Naive thymus-derived CD4-positive, alpha-beta T cell (primary cell): ENCODE measurements at regions of chr16 and their contacts with region 1.

Region 1: GRCh38 chr16:10385725-10386516 is at the start of gene ATF7IP2:
- DNase-seq: peak; percentile 68 to 85 (median 83)
- ATAC-seq: peak; percentile 99
- H3K4me3 ChIP-seq: peak within 1 kb of the TSS; percentile 67
- H3K4me3 Mint-ChIP-seq: peak within 1 kb of the TSS; percentile 89 to 99 (median 98)
- H3K27ac ChIP-seq: peak within 1 kb of the TSS; percentile 84
- H3K27ac Mint-ChIP-seq: peak within 1 kb of the TSS; percentile 90 to 99 (median 97)
- H3K4me1 ChIP-seq: peaks cover 14 to 16% of the 10 kb centered on the region in 2 donors
- H3K4me1 Mint-ChIP-seq: peaks cover 31 to 52% (median 47%) of the 10 kb centered on the region in 7 donors
- H3K27me3 ChIP-seq: no peaks in the 10 kb centered on the region
- H3K27me3 Mint-ChIP-seq: peaks cover 0 to 3% (median 0%) of the 10 kb centered on the region in 5 donors
- total RNA-seq, gene ATF7IP2: 56.5 to 75.5 (median 67.1) TPM

Region 2: GRCh38 chr16:10122546-10122945 is 263.4 kb before region 1 on chr16:
- CTCF ChIA-PET with region 1: no interaction called
- POLR2A ChIA-PET with region 1: no interaction called
- intact Hi-C with region 1: no loop called
- DNase-seq: no peak
- ATAC-seq: no peak
- H3K4me3 ChIP-seq: no peak overlapping the region
- H3K4me3 Mint-ChIP-seq: no peak overlapping the region
- H3K27ac ChIP-seq: no peak overlapping the region
- H3K27ac Mint-ChIP-seq: no peak overlapping the region
- H3K4me1 ChIP-seq: no peaks in the 10 kb centered on the region
- H3K4me1 Mint-ChIP-seq: no peaks in the 10 kb centered on the region
- H3K27me3 ChIP-seq: no peaks in the 10 kb centered on the region
- H3K27me3 Mint-ChIP-seq: peaks cover 0 to 26% (median 21%) of the 10 kb centered on the region in 5 donors

Region 3: GRCh38 chr16:10314811-10315210 is 71.1 kb before region 1 on chr16:
- CTCF ChIA-PET with region 1: interaction called, 4 read pairs
- POLR2A ChIA-PET with region 1: interaction called, 4 read pairs
- intact Hi-C with region 1: loop called in 1 of 2 experiments (anchors 2 kb)
- DNase-seq: peak in 6 of 9 donors; percentile 25 to 63 (median 46)
- ATAC-seq: peak; percentile 65
- H3K4me3 ChIP-seq: no peak overlapping the region
- H3K4me3 Mint-ChIP-seq: no peak overlapping the region
- H3K27ac ChIP-seq: no peak overlapping the region
- H3K27ac Mint-ChIP-seq: no peak overlapping the region
- H3K4me1 ChIP-seq: no peaks in the 10 kb centered on the region
- H3K4me1 Mint-ChIP-seq: peaks cover 9 to 27% (median 20%) of the 10 kb centered on the region in 7 donors
- H3K27me3 ChIP-seq: no peaks in the 10 kb centered on the region
- H3K27me3 Mint-ChIP-seq: no peaks in the 10 kb centered on the region

Region 4: GRCh38 chr16:10332241-10332640 is 53.7 kb before region 1 on chr16:
- CTCF ChIA-PET with region 1: no interaction called
- POLR2A ChIA-PET with region 1: interaction called, 5 read pairs
- intact Hi-C with region 1: loop called (anchors 1 to 2 kb)
- DNase-seq: no peak
- ATAC-seq: no peak
- H3K4me3 ChIP-seq: no peak overlapping the region
- H3K4me3 Mint-ChIP-seq: peak overlapping the region in 3 of 10 donors; percentile 14 to 47 (median 32)
- H3K27ac ChIP-seq: no peak overlapping the region
- H3K27ac Mint-ChIP-seq: peak overlapping the region in 6 of 9 donors; percentile 31 to 67 (median 59)
- H3K4me1 ChIP-seq: peaks cover 18 to 43% of the 10 kb centered on the region in 2 donors
- H3K4me1 Mint-ChIP-seq: peaks cover 11 to 54% (median 48%) of the 10 kb centered on the region in 7 donors
- H3K27me3 ChIP-seq: no peaks in the 10 kb centered on the region
- H3K27me3 Mint-ChIP-seq: no peaks in the 10 kb centered on the region

Region 5: GRCh38 chr16:10362077-10362863 is 23.7 kb before region 1 on chr16:
- CTCF ChIA-PET with region 1: no interaction called
- POLR2A ChIA-PET with region 1: interaction called, 4 read pairs
- intact Hi-C with region 1: loop called in 1 of 2 experiments (anchors 1 kb)
- DNase-seq: peak in 6 of 9 donors; percentile 21 to 50 (median 37)
- ATAC-seq: peak; percentile 51
- H3K4me3 ChIP-seq: no peak overlapping the region
- H3K4me3 Mint-ChIP-seq: peak overlapping the region; percentile 50 to 84 (median 71)
- H3K27ac ChIP-seq: no peak overlapping the region
- H3K27ac Mint-ChIP-seq: peak overlapping the region; percentile 76 to 94 (median 85)
- H3K4me1 ChIP-seq: peaks cover 0 to 16% of the 10 kb centered on the region in 2 donors
- H3K4me1 Mint-ChIP-seq: peaks cover 8 to 39% (median 27%) of the 10 kb centered on the region in 7 donors
- H3K27me3 ChIP-seq: no peaks in the 10 kb centered on the region
- H3K27me3 Mint-ChIP-seq: peaks cover 0 to 5% (median 0%) of the 10 kb centered on the region in 5 donors

Region 6: DNA sequence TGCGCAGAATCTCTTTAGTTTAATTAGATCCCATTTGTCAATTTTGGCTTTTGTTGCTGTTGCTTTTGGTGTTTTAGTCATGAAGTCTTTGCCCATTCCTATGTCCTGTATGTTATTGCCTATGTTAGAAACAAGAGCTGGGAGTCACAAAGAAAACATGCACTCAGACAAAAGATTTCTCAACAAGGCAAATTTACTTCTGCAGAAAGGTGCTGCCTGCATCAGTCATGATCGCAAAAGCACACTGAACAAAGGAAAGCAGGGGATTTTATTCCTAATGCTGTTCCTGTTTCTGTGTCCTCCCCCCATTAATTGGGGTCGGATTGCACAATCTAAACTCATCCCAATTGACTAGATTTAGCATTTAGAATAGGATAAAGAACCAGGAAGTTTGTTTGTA is 55.8 kb after region 1 on chr16:
- CTCF ChIA-PET with region 1: no interaction called
- POLR2A ChIA-PET with region 1: interaction called, 3 read pairs
- intact Hi-C with region 1: loop called in 1 of 2 experiments (anchors 5 kb)
- DNase-seq: no peak
- ATAC-seq: no peak
- H3K4me3 ChIP-seq: no peak overlapping the region
- H3K4me3 Mint-ChIP-seq: no peak overlapping the region
- H3K27ac ChIP-seq: no peak overlapping the region
- H3K27ac Mint-ChIP-seq: no peak overlapping the region
- H3K4me1 ChIP-seq: no peaks in the 10 kb centered on the region
- H3K4me1 Mint-ChIP-seq: peaks cover 0 to 1% (median 0%) of the 10 kb centered on the region in 7 donors
- H3K27me3 ChIP-seq: no peaks in the 10 kb centered on the region
- H3K27me3 Mint-ChIP-seq: no peaks in the 10 kb centered on the region

Region 7: DNA sequence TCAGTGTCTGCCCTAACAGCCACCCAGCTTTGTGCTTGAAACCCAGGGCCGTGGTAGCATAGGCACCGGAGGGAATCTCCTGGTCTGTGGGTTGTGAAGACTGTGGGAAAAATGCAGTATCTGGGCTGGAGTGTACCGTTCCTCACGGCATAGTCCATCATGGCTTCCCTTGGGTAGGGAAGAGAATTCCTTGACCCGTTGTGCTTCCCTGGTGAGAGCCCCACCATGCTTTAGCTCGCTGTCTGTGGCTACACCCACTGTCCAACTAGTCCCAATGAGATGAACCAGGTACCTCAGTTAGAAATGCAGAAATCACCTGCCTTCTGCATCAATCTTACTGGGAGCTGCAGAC is 67.2 kb after region 1 on chr16:
- CTCF ChIA-PET with region 1: no interaction called
- POLR2A ChIA-PET with region 1: no interaction called
- intact Hi-C with region 1: loop called in 1 of 2 experiments (anchors 10 kb)
- DNase-seq: no peak
- ATAC-seq: no peak
- H3K4me3 ChIP-seq: no peak overlapping the region
- H3K4me3 Mint-ChIP-seq: no peak overlapping the region
- H3K27ac ChIP-seq: no peak overlapping the region
- H3K27ac Mint-ChIP-seq: peak overlapping the region in 1 of 9 donors; percentile 12
- H3K4me1 ChIP-seq: peaks cover 0 to 13% of the 10 kb centered on the region in 2 donors
- H3K4me1 Mint-ChIP-seq: peaks cover 13 to 35% (median 27%) of the 10 kb centered on the region in 7 donors
- H3K27me3 ChIP-seq: no peaks in the 10 kb centered on the region
- H3K27me3 Mint-ChIP-seq: no peaks in the 10 kb centered on the region

Region 8: GRCh38 chr16:10509534-10510025 is 123.7 kb after region 1 on chr16:
- CTCF ChIA-PET with region 1: interaction called, 4 read pairs
- POLR2A ChIA-PET with region 1: no interaction called
- intact Hi-C with region 1: loop called (anchors 2 to 5 kb)
- DNase-seq: peak; percentile 18 to 78 (median 65)
- ATAC-seq: peak; percentile 90
- H3K4me3 ChIP-seq: no peak overlapping the region
- H3K4me3 Mint-ChIP-seq: no peak overlapping the region
- H3K27ac ChIP-seq: no peak overlapping the region
- H3K27ac Mint-ChIP-seq: peak overlapping the region in 5 of 9 donors; percentile 6 to 69 (median 53)
- H3K4me1 ChIP-seq: no peaks in the 10 kb centered on the region
- H3K4me1 Mint-ChIP-seq: peaks cover 2 to 10% (median 4%) of the 10 kb centered on the region in 7 donors
- H3K27me3 ChIP-seq: no peaks in the 10 kb centered on the region
- H3K27me3 Mint-ChIP-seq: peaks cover 0 to 8% (median 0%) of the 10 kb centered on the region in 5 donors